Activated T-helper 1 cell treated with anti-CD3 and anti-CD28 coated beads, Interleukin-12 subunit alpha, Interleukin-12 subunit beta, Interleukin-2, Interleukin-4 antibody, amounts not matched to agents 30 ng/mL and 10 ng/mL and 1 ng/mL, durations not matched to agents 14 hours and 24 hours and 36 hours (primary cell): ENCODE measurements at regions of chr11 and their contacts with region 1.

Region 1: GRCh38 chr11:67353317-67354074 is at the start of gene POLD4:
- DNase-seq: peak; percentile 95
- H3K4me3 Mint-ChIP-seq: peak within 1 kb of the TSS; percentile 94
- H3K27ac Mint-ChIP-seq: peak within 1 kb of the TSS; percentile 98
- H3K4me1 Mint-ChIP-seq: peaks cover 34% of the 10 kb centered on the region
- H3K27me3 Mint-ChIP-seq: peaks cover 1% of the 10 kb centered on the region
- total RNA-seq, gene POLD4: 36.7 and 39.8 TPM in 2 replicates

Region 2: DNA sequence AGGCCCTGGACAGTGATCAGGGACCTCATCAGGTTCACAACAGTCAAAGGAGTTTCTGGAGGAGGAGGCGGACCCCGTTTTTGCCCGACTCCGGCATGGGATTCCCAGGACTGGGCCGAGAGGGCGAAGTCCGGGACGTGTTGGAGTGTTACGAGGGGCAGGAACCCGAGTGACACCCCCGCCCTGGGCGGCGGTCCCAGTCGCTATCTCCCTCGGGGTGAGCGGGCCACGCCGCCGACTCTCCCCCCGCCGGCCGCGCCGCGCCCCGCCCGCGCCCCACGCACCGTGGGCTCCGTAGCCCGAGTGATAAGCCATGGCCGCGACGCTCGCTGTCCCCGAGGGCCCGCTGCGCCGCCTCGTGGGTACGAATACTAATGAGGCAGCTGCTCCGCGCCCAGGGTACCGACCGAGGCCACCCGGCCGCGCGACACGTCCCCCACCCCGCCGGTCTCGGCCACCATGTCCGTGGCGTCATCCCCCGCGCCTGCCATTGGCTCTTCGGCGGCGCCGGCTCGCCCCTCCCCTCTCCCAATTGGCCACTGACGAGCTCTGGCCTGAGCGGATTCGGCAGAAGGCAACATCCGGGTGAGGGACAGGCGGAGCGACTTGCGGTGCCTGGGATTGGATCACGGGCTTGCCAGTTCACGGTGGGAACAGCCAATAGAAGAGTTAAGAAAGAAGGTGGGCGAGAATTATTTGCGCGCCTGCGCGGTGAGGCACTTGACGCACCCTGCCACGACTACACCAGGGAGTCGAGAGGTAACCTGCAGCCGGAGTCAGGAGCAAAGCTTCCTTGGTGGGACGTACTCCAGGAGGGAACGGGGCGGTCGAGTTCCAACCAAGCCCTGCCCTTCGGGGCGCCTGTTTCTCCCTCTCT is 1064.6 kb before region 1 on chr11 and contains the start of gene YIF1A:
- intact Hi-C with region 1: loop called (anchors 2 kb)
- DNase-seq: peak; percentile 99
- H3K4me3 Mint-ChIP-seq: peak within 1 kb of the TSS; percentile 95
- H3K27ac Mint-ChIP-seq: peak within 1 kb of the TSS; percentile 99
- H3K4me1 Mint-ChIP-seq: peaks cover 39% of the 10 kb centered on the region
- H3K27me3 Mint-ChIP-seq: peaks cover 28% of the 10 kb centered on the region
- total RNA-seq, gene YIF1A: 125 and 127 TPM in 2 replicates

Region 3: DNA sequence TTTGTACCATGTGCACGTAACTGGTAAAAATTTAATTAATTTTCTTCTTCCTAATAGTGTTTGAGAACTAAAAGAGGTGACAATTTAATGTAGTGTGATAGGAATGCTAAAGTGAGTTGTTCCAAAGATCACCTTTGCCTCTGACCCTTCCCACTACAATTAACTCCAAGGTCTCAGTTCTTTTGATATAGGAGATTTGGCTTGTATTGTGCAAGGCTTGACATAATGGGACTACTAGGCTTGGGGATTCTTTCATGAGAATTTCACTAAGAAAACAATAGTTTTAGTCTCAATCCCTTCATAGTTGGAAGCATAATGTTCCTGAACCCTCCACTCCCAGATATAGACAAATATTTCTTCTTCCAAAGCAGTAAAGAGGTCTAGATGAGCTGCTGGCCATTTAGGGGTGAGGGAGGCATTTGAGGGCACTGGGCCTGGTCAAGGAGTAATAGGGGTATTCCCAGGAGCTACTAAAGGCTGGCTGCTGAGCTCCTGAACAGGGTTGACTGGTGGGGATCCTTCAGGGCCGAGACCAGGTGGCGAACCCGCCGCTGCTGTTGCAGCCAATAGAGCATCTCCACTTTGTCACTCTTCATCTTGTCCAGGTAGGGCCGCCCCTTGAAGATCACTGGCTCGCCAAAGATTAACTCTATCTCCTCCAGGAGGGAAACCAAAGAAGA is 763.4 kb before region 1 on chr11:
- intact Hi-C with region 1: no loop called
- DNase-seq: no peak
- H3K4me3 Mint-ChIP-seq: no peak overlapping the region
- H3K27ac Mint-ChIP-seq: no peak overlapping the region
- H3K4me1 Mint-ChIP-seq: peaks cover 24% of the 10 kb centered on the region
- H3K27me3 Mint-ChIP-seq: no peaks in the 10 kb centered on the region

Region 4: DNA sequence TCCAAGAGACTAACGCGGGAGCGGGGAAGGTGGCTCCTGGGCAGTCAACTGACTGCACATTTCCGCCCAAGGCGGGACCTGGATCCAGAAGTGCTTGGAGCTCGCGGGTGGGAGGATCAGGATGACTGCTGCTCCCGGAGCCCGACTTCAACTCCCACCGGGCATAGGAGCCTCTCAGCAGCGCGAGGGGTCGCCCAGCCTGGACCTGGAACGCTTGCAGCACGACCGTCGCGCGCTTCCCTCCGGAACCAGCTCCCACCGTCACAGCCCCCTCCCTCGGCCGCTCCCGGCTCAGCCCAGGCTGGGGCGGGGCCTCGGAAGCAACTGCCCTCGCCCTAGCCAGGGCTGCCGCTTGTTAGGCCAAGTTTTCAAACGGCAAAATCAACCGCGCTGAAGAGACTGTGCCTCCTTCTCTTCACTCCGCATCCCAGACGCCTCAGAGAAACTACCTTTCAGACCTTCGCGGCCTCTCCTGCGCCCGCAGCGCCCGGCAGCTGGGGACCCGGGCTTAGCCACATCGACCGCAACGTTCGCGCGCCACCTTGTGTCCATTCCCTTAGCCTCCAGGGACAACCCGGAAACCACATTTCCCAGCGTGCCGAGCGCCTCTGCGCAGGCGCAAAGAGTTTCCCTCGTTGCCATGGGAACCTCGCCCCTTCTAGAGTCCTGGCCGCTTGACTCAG is 36.1 kb before region 1 on chr11:
- intact Hi-C with region 1: loop called (anchors 1 kb)
- DNase-seq: peak; percentile 98
- H3K4me3 Mint-ChIP-seq: peak overlapping the region; percentile 94
- H3K27ac Mint-ChIP-seq: peak overlapping the region; percentile 100
- H3K4me1 Mint-ChIP-seq: peaks cover 39% of the 10 kb centered on the region
- H3K27me3 Mint-ChIP-seq: peaks cover 4% of the 10 kb centered on the region

Region 5: GRCh38 chr11:67373925-67374618 is 20.6 kb after region 1 on chr11:
- intact Hi-C with region 1: loop called (anchors 1 kb)
- DNase-seq: peak; percentile 31
- H3K4me3 Mint-ChIP-seq: peak overlapping the region; percentile 87
- H3K27ac Mint-ChIP-seq: no peak overlapping the region
- H3K4me1 Mint-ChIP-seq: peaks cover 20% of the 10 kb centered on the region
- H3K27me3 Mint-ChIP-seq: peaks cover 58% of the 10 kb centered on the region

Region 6: DNA sequence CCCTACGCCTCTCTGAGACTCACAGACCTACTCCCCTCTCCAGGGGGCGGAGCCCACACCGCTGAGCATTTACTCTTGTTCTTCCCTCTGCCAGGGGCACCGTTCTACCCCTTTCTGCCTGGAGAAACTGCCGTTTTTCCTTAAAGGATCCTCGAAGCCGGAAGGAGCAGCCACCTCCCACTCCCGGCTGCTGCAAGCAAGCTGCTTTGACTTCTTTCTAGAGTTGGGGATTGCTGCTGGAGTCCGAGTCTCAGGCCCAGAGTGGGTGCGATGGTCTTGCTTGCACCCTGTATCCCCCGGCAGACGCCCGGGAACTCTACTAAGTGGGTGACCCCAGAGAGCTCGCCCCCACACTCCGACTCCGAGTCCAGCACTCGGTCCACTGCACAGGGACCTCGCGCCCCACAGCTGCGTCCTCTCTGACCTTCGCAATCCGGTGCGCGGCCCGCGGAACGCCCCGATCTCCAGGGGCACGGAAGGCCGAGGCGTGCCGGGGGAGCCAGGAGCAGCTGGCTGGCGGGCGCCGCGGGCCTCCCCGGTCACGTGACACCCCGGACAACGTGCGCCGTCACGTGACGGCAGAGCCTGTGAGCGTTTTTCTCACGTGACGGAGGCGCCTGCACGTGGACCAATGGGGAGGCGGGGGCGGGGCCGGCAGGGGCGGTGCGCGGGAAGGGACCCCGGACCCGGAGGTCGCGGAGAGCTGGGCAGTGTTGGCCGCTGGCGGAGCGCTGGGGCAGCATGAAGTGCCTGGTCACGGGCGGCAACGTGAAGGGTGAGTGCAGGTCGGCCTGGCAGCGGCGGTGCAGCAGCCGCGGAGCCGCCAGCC is 38.0 kb after region 1 on chr11 and contains the start of gene RAD9A:
- intact Hi-C with region 1: loop called (anchors 1 kb)
- DNase-seq: peak; percentile 89
- H3K4me3 Mint-ChIP-seq: peak within 1 kb of the TSS; percentile 90
- H3K27ac Mint-ChIP-seq: peak within 1 kb of the TSS; percentile 67
- H3K4me1 Mint-ChIP-seq: peaks cover 35% of the 10 kb centered on the region
- H3K27me3 Mint-ChIP-seq: peaks cover 4% of the 10 kb centered on the region
- total RNA-seq, gene RAD9A: 30.7 and 31.6 TPM in 2 replicates

Region 7: DNA sequence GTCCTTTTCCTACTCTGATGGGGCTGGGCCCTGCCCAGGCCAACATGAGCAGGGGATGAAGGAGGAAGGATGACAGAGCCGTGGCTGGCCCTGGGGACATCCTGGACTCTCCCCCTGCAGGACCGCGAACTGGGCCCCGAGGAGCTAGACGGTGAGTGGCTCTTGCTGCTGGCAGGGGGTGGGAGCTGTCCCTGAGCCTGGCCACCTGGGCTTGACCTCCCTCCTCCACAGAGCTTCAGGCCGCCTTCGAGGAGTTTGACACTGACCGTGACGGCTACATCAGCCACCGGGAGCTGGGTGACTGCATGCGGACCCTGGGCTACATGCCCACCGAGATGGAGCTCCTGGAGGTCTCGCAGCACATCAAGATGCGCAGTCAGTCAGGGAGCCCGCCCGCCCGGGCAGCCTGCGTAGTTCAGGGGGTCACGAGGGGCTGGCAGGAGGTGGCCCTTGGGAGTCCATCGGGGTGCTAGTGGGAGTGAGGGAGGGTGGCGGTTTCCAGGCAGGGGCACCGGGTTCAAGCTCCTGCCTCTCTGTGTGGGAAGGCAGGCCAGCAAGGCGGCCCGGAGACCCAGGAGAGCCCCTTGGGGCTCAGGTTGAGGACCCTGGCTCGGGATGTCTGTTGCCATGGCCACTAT is 102.7 kb after region 1 on chr11:
- intact Hi-C with region 1: no loop called
- DNase-seq: no peak
- H3K4me3 Mint-ChIP-seq: no peak overlapping the region
- H3K27ac Mint-ChIP-seq: no peak overlapping the region
- H3K4me1 Mint-ChIP-seq: no peaks in the 10 kb centered on the region
- H3K27me3 Mint-ChIP-seq: peaks cover 4% of the 10 kb centered on the region

Region 8: DNA sequence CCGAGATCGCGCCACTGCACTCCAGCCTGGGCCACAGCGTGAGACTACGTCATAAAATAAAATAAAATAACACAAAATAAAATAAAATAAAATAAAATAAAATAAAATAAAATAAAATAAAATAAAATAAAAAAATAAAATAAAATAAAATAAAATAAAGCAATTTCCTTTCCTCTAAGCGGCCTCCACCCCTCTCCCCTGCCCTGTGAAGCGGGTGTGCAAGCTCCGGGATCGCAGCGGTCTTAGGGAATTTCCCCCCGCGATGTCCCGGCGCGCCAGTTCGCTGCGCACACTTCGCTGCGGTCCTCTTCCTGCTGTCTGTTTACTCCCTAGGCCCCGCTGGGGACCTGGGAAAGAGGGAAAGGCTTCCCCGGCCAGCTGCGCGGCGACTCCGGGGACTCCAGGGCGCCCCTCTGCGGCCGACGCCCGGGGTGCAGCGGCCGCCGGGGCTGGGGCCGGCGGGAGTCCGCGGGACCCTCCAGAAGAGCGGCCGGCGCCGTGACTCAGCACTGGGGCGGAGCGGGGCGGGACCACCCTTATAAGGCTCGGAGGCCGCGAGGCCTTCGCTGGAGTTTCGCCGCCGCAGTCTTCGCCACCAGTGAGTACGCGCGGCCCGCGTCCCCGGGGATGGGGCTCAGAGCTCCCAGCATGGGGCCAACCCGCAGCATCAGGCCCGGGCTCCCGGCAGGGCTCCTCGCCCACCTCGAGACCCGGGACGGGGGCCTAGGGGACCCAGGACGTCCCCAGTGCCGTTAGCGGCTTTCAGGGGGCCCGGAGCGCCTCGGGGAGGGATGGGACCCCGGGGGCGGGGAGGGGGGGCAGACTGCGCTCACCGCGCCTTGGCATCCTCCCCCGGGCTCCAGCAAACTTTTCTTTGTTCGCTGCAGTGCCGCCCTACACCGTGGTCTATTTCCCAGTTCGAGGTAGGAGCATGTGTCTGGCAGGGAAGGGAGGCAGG is 230.0 kb after region 1 on chr11 and contains the start of gene GSTP1:
- intact Hi-C with region 1: loop called (anchors 10 kb)
- DNase-seq: peak; percentile 74
- H3K4me3 Mint-ChIP-seq: peak within 1 kb of the TSS; percentile 90
- H3K27ac Mint-ChIP-seq: peak within 1 kb of the TSS; percentile 87
- H3K4me1 Mint-ChIP-seq: peaks cover 47% of the 10 kb centered on the region
- H3K27me3 Mint-ChIP-seq: peaks cover 18% of the 10 kb centered on the region
- total RNA-seq, gene GSTP1: 278 and 289 TPM in 2 replicates